ENCODE measurements at regions of chr20 and their contacts with region 1.

Region 1: DNA sequence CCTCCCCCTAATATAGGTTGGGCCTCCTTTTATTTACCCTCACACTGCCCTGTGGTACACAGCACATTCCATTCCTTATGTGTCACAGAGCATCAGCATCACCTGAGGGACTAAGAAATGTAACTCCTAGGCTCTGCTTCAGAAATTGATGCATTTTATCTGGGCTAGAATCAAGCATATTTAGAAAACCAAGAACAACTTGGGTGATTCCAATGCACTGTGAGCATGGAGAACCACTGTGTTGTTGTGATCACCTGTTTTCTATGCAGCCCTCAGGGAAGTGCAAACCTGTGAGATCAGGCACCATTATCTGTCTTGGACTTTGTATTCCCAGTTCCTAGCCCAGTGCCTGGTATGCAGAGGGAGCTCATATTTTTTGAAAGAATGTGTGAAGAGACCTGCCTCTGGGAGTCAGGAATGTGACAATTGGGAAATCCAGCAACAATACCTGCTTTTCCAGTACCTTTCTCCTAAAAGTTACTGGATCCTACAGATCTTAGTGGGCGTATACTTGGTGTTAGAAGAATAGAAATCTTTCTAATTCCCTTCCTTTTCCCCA is 7.0 kb downstream of the KAT14 start:
- DNase-seq: no peak
- H3K4me3 ChIP-seq: no peak overlapping the region
- H3K4me3 Mint-ChIP-seq: no peak overlapping the region
- H3K27ac ChIP-seq: no peak overlapping the region
- H3K27ac Mint-ChIP-seq: no peak overlapping the region
- H3K4me1 ChIP-seq: no peaks in the 10 kb centered on the region
- H3K4me1 Mint-ChIP-seq: peaks cover 6% of the 10 kb centered on the region
- H3K27me3 ChIP-seq: no peaks in the 10 kb centered on the region
- H3K27me3 Mint-ChIP-seq: no peaks in the 10 kb centered on the region
- CTCF ChIP-seq: no peak

Region 2: GRCh38 chr20:17968366-17969279 is 176.0 kb before region 1 on chr20 and contains the starts of genes MGME1 and SNX5:
- intact Hi-C with region 1: loop called in 1 of 2 experiments (anchors 5 kb)
- DNase-seq: peak; percentile 98 to 99 (median 99)
- H3K4me3 ChIP-seq: peak within 1 kb of the TSS; percentile 83 to 93 (median 92)
- H3K4me3 Mint-ChIP-seq: peak within 1 kb of the TSS; percentile 88 to 99
- H3K27ac ChIP-seq: peak within 1 kb of the TSS; percentile 93 to 97
- H3K27ac Mint-ChIP-seq: peak within 1 kb of the TSS; percentile 97 to 100 (median 99)
- H3K4me1 ChIP-seq: peaks cover 74 to 94% of the 10 kb centered on the region in 2 donors
- H3K4me1 Mint-ChIP-seq: peaks cover 75% of the 10 kb centered on the region
- H3K27me3 ChIP-seq: no peaks in the 10 kb centered on the region
- H3K27me3 Mint-ChIP-seq: no peaks in the 10 kb centered on the region
- CTCF ChIP-seq: no peak
- polyA plus RNA-seq, gene MGME1: 2.5 to 20.1 (median 13.4) TPM
- polyA plus RNA-seq, gene SNX5: 55.6 to 83.8 (median 66.1) TPM